ENCODE measurements at regions of chr20 and their contacts with region 1.

Region 1: GRCh38 chr20:45049904-45050471 is 50.9 kb downstream of the KCNS1 start:
- DNase-seq: no peak
- H3K4me3 ChIP-seq: no peak overlapping the region
- H3K27ac ChIP-seq: no peak overlapping the region
- H3K4me1 ChIP-seq: peaks cover 0 to 21% (median 15%) of the 10 kb centered on the region in 4 donors
- H3K27me3 ChIP-seq: no peaks in the 10 kb centered on the region
- CTCF ChIP-seq: no peak

Region 2: GRCh38 chr20:44666066-44666465 is 383.9 kb before region 1 on chr20:
- intact Hi-C with region 1: no loop called
- DNase-seq: no peak
- H3K4me3 ChIP-seq: no peak overlapping the region
- H3K27ac ChIP-seq: no peak overlapping the region
- H3K4me1 ChIP-seq: no peaks in the 10 kb centered on the region
- H3K27me3 ChIP-seq: peaks cover 0 to 3% of the 10 kb centered on the region in 2 donors
- CTCF ChIP-seq: no peak

Region 3: DNA sequence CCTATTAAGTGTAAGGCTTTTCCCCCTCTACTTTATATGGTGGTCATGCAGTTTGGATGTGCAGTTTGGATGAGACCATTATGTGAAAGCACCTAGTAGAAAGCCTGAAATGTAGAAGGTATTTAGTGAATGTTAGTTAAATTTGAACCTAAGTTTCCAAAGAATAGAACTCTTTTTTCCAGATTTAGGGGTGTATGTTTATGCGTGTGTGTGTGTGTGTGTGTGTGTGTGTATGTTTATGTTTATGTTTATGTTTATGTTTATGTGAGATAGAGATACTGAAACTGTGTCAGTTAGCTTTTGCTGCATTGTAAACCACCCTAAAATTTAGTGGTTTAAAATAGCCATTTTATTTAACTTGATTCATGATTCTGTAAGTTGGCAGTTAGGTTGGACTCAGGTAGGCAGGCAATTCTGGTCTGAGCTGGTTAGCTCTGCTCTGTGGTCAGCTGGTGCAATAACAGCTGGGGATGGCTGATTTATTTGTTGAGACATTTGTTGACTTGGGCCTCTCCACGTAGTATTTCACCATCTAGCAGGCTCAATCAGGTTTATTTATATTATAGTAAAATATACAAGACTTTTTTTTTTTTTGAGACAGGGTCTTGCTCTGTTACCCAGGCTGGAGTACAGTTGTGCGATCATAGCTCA is 29.6 kb before region 1 on chr20:
- intact Hi-C with region 1: no loop called
- DNase-seq: no peak
- H3K4me3 ChIP-seq: no peak overlapping the region
- H3K27ac ChIP-seq: no peak overlapping the region
- H3K4me1 ChIP-seq: peaks cover 0 to 14% (median 3%) of the 10 kb centered on the region in 4 donors
- H3K27me3 ChIP-seq: no peaks in the 10 kb centered on the region
- CTCF ChIP-seq: no peak

Region 4: GRCh38 chr20:45090481-45090880 is 40.5 kb after region 1 on chr20:
- intact Hi-C with region 1: loop called (anchors 5 kb)
- DNase-seq: no peak
- H3K4me3 ChIP-seq: no peak overlapping the region
- H3K27ac ChIP-seq: no peak overlapping the region
- H3K4me1 ChIP-seq: no peaks in the 10 kb centered on the region
- H3K27me3 ChIP-seq: no peaks in the 10 kb centered on the region
- CTCF ChIP-seq: no peak